ENCODE measurements at regions of chr12 and their contacts with region 1.

Region 1: GRCh38 chr12:31832740-31833729 is 104.2 kb upstream of the AMN1 start:
- ATAC-seq: no peak
- H3K4me3 ChIP-seq: no peak overlapping the region
- H3K27ac ChIP-seq: no peak overlapping the region
- H3K4me1 ChIP-seq: no peaks in the 10 kb centered on the region

Region 2: DNA sequence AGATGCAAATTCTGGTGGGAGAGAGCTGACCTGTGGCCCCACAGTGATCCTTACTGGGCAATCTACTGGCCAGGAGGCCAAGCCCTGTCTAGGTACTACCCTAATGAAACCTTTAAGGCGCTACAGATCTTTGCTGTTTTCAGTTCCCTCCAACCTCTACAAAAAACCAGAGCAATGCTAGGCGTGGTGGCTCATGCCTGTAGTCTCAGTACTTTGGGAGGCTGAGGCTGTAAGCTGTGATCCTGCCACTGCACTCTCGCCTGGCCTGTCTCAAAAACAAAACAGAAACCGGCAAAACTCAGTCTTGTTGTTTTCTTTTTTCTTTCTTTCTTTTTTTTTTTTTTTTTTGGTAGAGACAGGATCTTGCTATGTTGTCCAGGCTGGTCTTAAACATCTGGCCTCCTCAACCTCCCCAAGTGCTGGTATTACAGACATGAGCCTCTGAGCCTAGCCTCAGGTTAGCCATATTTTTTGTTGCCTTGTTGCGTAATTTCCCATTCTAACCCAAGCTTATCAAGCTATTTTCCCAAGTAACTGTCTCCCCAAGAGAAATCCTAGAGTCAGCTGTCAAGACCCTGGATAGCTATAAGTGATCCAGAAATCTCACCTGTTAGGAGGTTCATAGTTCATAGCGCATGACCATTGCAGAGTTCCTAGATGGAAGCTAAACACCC is 170.7 kb before region 1 on chr12:
- in situ Hi-C with region 1: no loop called
- ATAC-seq: no peak
- H3K4me3 ChIP-seq: no peak overlapping the region
- H3K27ac ChIP-seq: no peak overlapping the region
- H3K4me1 ChIP-seq: peaks cover 4 to 7% of the 10 kb centered on the region in 2 donors

Region 3: DNA sequence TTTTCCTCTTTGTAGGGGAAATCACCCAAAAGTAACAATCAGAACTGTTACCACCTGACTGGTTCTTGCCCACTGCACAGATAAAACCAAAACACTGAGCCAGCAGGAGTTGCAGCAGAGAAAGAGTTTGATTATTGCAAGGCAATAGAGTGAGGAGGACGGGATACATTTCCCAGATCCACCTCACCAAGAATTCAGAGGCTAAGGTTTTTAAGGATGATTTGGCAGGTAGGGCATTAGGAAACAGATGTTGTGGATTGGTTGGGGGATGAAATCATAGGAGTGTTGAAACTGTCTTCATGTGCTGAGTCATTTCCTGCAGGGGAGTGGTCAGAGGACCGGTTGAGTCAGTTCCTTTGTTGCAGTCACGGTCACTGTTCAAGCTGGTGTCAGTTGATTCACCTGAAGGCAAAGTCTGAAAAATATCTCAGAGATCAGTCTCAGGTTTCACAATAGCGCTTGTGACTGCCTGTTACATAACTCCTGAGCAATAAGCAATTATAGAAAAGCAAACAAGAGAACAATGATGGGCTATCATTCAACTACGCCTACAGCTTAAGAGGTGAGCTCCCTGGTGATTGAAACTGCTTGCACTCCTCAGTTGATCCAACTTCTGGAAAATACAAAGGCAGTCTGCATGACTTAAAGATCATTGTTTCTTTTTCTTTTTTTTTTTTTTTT is 83.9 kb before region 1 on chr12:
- in situ Hi-C with region 1: no loop called
- ATAC-seq: peak; percentile 65 to 96 (median 89)
- H3K4me3 ChIP-seq: no peak overlapping the region
- H3K27ac ChIP-seq: no peak overlapping the region
- H3K4me1 ChIP-seq: peaks cover 6% of the 10 kb centered on the region in 2 donors

Region 4: GRCh38 chr12:31783996-31784645 is 48.9 kb before region 1 on chr12:
- in situ Hi-C with region 1: no loop called
- ATAC-seq: no peak
- H3K4me3 ChIP-seq: no peak overlapping the region
- H3K27ac ChIP-seq: no peak overlapping the region
- H3K4me1 ChIP-seq: no peaks in the 10 kb centered on the region

Region 5: GRCh38 chr12:31928246-31929026 is 95.4 kb after region 1 on chr12:
- in situ Hi-C with region 1: loop called in 1 of 9 experiments (anchors 25 kb)
- ATAC-seq: no peak
- H3K4me3 ChIP-seq: no peak overlapping the region
- H3K27ac ChIP-seq: no peak overlapping the region
- H3K4me1 ChIP-seq: no peaks in the 10 kb centered on the region

Region 6: DNA sequence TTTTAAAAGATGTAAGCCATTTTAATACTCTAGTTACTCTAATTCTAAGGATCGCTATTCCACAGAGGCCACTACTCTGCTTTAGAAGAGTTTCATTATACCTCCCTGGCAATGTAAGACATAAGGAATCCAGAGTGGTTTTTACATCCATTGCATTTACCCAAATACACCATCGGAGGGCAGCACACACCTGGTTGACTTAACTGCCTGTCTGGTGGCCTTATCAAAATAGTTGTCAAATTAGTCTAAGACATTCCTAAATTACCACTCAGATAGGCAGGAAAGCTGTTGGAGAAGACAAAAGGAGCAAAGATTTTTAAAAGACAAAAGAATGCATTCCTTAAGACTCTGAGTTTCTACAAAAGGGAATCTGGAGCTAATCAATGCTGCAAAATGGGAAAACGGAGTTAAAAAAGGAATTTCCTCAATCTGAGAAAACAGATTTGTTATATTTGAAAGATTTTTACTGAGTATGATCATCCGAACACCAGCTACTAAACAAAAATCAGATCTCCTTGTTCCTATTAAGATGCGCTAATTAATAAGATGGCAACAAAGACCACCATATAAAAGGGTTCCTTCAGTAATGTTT is 532.5 kb after region 1 on chr12:
- in situ Hi-C with region 1: no loop called
- ATAC-seq: peak in 5 of 8 experiments; percentile 51 to 79 (median 65)
- H3K4me3 ChIP-seq: no peak overlapping the region
- H3K27ac ChIP-seq: no peak overlapping the region
- H3K4me1 ChIP-seq: no peaks in the 10 kb centered on the region